ENCODE measurements at regions of chr7 and their contacts with region 1.

Region 1: GRCh38 chr7:142782922-142783900 is 12.4 kb downstream of the PRSS2 start:
- DNase-seq: peak; percentile 89
- ATAC-seq: peak; percentile 98
- H3K4me3 ChIP-seq: peak overlapping the region; percentile 40
- H3K27ac ChIP-seq: no peak overlapping the region
- H3K4me1 ChIP-seq: no peaks in the 10 kb centered on the region
- H3K27me3 ChIP-seq: peaks cover 11% of the 10 kb centered on the region
- CTCF ChIP-seq: peak; percentile 100
- POLR2A ChIP-seq: no peak
- RAD21 ChIP-seq: peak; percentile 95

Region 2: DNA sequence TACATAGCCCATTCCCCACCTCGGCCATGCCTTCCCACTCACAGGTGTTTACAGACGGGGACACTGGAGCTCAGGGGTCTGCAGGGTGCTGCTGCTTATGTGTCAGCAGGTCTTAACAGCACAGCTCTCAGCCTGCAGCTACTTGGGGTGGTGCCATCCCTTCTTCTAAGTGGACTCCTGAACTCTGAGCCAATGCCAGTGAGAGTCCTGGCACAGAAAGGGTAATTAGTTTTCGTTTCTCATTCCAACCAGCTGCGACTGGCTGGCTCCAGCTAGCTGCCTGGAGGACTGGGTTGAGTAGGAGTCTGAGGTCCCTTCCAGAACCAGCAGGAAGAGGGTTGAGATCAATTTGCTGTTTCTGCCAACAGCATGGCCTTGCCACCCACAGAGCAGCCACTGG is 1320.3 kb before region 1 on chr7:
- CTCF ChIA-PET with region 1: no interaction called
- POLR2A ChIA-PET with region 1: no interaction called
- dilution Hi-C with region 1: no loop called
- in situ Hi-C with region 1: no loop called
- intact Hi-C with region 1: no loop called
- DNase-seq: no peak
- ATAC-seq: no peak
- H3K4me3 ChIP-seq: no peak overlapping the region
- H3K27ac ChIP-seq: no peak overlapping the region
- H3K4me1 ChIP-seq: no peaks in the 10 kb centered on the region
- H3K27me3 ChIP-seq: no peaks in the 10 kb centered on the region
- CTCF ChIP-seq: no peak
- POLR2A ChIP-seq: no peak
- RAD21 ChIP-seq: no peak

Region 3: GRCh38 chr7:142357953-142358520 is 425.2 kb before region 1 on chr7:
- CTCF ChIA-PET with region 1: interaction called, 3 read pairs
- POLR2A ChIA-PET with region 1: no interaction called
- dilution Hi-C with region 1: no loop called
- in situ Hi-C with region 1: no loop called
- intact Hi-C with region 1: loop called (anchors 5 kb)
- DNase-seq: peak; percentile 83
- ATAC-seq: peak; percentile 96
- H3K4me3 ChIP-seq: no peak overlapping the region
- H3K27ac ChIP-seq: no peak overlapping the region
- H3K4me1 ChIP-seq: peaks cover 2% of the 10 kb centered on the region; the same call in 1 of the 2 replicates
- H3K27me3 ChIP-seq: peaks cover 3% of the 10 kb centered on the region; the same call in 1 of the 2 replicates
- CTCF ChIP-seq: peak; percentile 88
- POLR2A ChIP-seq: no peak
- RAD21 ChIP-seq: peak; percentile 82

Region 4: GRCh38 chr7:142496545-142497041 is 286.6 kb before region 1 on chr7:
- CTCF ChIA-PET with region 1: interaction called, 8 read pairs
- POLR2A ChIA-PET with region 1: no interaction called
- dilution Hi-C with region 1: loop called (anchors 25 kb)
- in situ Hi-C with region 1: no loop called
- intact Hi-C with region 1: loop called (anchors 1 kb)
- DNase-seq: peak; percentile 54
- ATAC-seq: peak; percentile 50
- H3K4me3 ChIP-seq: no peak overlapping the region
- H3K27ac ChIP-seq: no peak overlapping the region
- H3K4me1 ChIP-seq: peaks cover 8% of the 10 kb centered on the region
- H3K27me3 ChIP-seq: 0 out of 2 replicates have a peak, but pooled peaks cover 1% of the 10 kb centered on the region
- CTCF ChIP-seq: peak; percentile 68
- POLR2A ChIP-seq: no peak
- RAD21 ChIP-seq: peak; percentile 53

Region 5: GRCh38 chr7:142523821-142524460 is 259.3 kb before region 1 on chr7:
- CTCF ChIA-PET with region 1: interaction called, 13 read pairs
- POLR2A ChIA-PET with region 1: no interaction called
- dilution Hi-C with region 1: loop called (anchors 25 kb)
- in situ Hi-C with region 1: no loop called
- intact Hi-C with region 1: no loop called
- DNase-seq: no peak
- ATAC-seq: peak; percentile 72
- H3K4me3 ChIP-seq: no peak overlapping the region
- H3K27ac ChIP-seq: no peak overlapping the region
- H3K4me1 ChIP-seq: no peaks in the 10 kb centered on the region
- H3K27me3 ChIP-seq: peaks cover 20% of the 10 kb centered on the region
- CTCF ChIP-seq: peak; percentile 22; the same call in 1 of the 2 replicates
- POLR2A ChIP-seq: no peak
- RAD21 ChIP-seq: no peak

Region 6: GRCh38 chr7:142632291-142633134 is 150.7 kb before region 1 on chr7:
- CTCF ChIA-PET with region 1: interaction called, 13 read pairs
- POLR2A ChIA-PET with region 1: no interaction called
- dilution Hi-C with region 1: no loop called
- in situ Hi-C with region 1: no loop called
- intact Hi-C with region 1: loop called (anchors 1 kb)
- DNase-seq: peak; percentile 60
- ATAC-seq: peak; percentile 98
- H3K4me3 ChIP-seq: no peak overlapping the region
- H3K27ac ChIP-seq: no peak overlapping the region
- H3K4me1 ChIP-seq: peaks cover 3% of the 10 kb centered on the region
- H3K27me3 ChIP-seq: peaks cover 4% of the 10 kb centered on the region; the same call in 1 of the 2 replicates
- CTCF ChIP-seq: peak; percentile 73
- POLR2A ChIP-seq: no peak
- RAD21 ChIP-seq: peak; percentile 68

Region 7: DNA sequence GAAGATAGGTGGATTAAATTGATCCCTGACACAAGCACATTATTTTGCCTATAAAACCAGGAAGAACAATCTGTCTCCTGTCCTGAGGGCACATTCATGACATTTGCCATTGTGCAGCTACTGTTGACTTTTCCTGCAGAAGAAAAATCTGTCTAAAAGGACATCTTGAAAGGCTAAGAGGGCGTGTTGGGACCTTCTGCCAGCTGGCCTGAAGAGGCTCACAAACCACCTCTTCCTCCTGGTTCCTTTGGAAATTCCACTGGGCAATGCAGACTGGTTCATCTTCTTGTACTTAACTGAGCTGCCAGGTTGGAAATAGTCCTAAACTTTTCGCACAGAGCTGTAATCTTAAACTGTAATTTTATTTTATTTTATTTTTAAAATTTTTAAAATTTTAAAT is 312.9 kb after region 1 on chr7:
- CTCF ChIA-PET with region 1: no interaction called
- POLR2A ChIA-PET with region 1: no interaction called
- dilution Hi-C with region 1: no loop called
- in situ Hi-C with region 1: no loop called
- intact Hi-C with region 1: no loop called
- DNase-seq: no peak
- ATAC-seq: no peak
- H3K4me3 ChIP-seq: no peak overlapping the region
- H3K27ac ChIP-seq: no peak overlapping the region
- H3K4me1 ChIP-seq: no peaks in the 10 kb centered on the region
- H3K27me3 ChIP-seq: no peaks in the 10 kb centered on the region
- CTCF ChIP-seq: no peak
- POLR2A ChIP-seq: no peak
- RAD21 ChIP-seq: no peak